HEK293 (cell line): ENCODE measurements at regions of chr10 and their contacts with region 1.

Region 1: DNA sequence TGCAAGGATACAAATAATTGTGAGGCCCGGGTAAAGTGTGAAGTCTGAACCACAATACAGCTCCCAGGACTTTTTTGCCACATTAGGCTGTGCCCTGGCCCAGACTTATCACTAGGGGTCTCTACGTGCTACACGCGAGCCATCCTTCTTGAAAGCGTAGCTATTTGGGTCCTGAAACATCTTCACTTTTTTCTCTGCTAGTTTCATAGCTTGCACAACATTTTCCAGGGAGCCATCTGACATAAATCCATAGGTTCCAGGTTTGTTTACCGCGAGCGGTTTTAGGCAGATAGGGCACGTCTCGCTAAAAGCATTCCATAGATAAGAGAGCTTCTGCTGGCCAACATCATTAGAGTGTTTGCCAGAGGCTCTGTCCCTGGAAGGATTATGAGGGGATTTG is 226.5 kb downstream of the RPS24 start:
- H3K4me3 ChIP-seq: no peak overlapping the region
- H3K27ac ChIP-seq: no peak overlapping the region; the same call in 1 of the 2 replicates
- H3K4me1 ChIP-seq: peaks cover 5% of the 10 kb centered on the region; the same call in 1 of the 2 replicates
- CTCF ChIP-seq: no peak

Region 2: DNA sequence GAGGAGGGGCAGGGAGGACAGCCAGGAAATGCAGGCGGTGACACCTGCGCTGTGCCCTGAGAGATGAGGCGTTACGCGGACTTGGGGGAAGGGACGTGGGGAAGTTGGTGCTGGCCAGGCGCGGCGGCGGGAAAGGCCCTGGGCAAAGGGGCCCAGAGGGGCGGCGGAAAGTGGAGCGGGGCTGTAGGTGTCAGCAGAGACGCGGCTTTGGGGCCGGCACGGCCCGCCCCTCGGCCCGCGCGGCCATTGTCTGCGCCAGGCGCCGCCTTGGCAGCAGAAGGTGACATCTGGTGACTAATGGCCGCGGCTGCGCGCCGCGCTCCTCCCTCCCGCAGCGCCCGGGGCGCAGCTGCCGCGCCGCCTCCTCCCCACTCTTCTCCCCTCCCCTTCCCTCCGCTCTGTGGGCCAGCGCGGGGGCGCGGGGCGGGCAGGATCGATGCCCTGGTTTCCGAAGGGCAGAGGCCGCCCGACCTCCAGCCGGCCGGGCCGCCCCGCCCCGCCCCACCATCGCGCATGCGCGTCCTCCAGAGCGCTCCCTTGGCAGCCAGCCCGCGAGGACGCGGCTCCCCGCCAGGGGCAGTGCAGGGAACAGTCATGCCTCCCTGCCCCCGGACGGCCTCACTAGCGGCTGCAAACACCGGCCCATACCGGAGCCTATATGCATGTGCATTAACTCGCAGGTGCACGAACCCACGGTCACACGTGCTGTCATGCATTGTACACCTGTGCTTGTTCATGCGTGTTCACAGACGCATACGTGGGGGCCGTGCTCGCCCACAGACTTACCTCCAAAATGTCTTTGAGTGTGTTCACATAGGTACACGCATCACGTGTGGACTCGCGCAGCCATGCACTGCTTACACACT is 43.1 kb after region 1 on chr10:
- CTCF ChIA-PET with region 1: interaction called, 14 read pairs
- POLR2A ChIA-PET with region 1: interaction called, 3 read pairs
- H3K4me3 ChIP-seq: peak overlapping the region; percentile 56
- H3K27ac ChIP-seq: peak overlapping the region; percentile 80; the same call in 1 of the 2 replicates
- H3K4me1 ChIP-seq: peaks cover 4% of the 10 kb centered on the region
- CTCF ChIP-seq: peak; percentile 92